ENCODE measurements at regions of chr1 and their contacts with region 1.

Region 1: GRCh38 chr1:31182352-31182751 is 57.3 kb downstream of the NKAIN1 start:
- DNase-seq: peak; percentile 82
- H3K4me3 ChIP-seq: peak overlapping the region; percentile 51
- H3K27ac ChIP-seq: no peak overlapping the region
- H3K4me1 ChIP-seq: peaks cover 15% of the 10 kb centered on the region
- H3K27me3 ChIP-seq: peaks cover 46% of the 10 kb centered on the region
- CTCF ChIP-seq: peak; percentile 37

Region 2: GRCh38 chr1:31072304-31072746 is 110.0 kb before region 1 on chr1:
- intact Hi-C with region 1: no loop called
- DNase-seq: no peak
- H3K4me3 ChIP-seq: no peak overlapping the region
- H3K27ac ChIP-seq: no peak overlapping the region
- H3K4me1 ChIP-seq: no peaks in the 10 kb centered on the region
- H3K27me3 ChIP-seq: no peaks in the 10 kb centered on the region
- CTCF ChIP-seq: no peak

Region 3: DNA sequence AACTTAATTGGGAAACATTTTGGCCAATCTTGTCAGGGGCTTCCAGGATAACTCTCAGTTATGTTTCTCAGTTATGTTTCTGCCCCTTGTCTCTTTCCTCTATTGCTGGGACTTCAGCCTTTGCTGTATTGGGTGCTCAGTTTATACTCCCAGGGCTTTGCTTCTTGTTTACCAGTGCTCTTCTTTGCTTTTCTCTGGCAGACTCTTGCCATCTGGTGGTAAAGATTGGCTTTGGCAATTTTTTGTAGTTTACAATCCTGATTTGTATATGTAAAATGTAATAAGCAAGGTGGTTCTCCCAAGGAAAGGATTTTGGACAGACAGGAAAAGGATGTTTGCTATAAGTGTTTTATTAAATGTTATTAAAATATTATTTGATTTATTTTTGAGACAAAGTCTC is 152.7 kb after region 1 on chr1:
- intact Hi-C with region 1: loop called (anchors 10 kb)
- DNase-seq: no peak
- H3K4me3 ChIP-seq: no peak overlapping the region
- H3K27ac ChIP-seq: no peak overlapping the region
- H3K4me1 ChIP-seq: no peaks in the 10 kb centered on the region
- H3K27me3 ChIP-seq: no peaks in the 10 kb centered on the region
- CTCF ChIP-seq: peak; percentile 61